ENCODE measurements at regions of chr5 and their contacts with region 1.

Region 1: GRCh38 chr5:40688127-40688761 is 8.5 kb downstream of the PTGER4 start:
- DNase-seq: peak in 1 of 2 donors; percentile 91
- H3K4me3 ChIP-seq: no peak overlapping the region
- H3K27ac ChIP-seq: no peak overlapping the region
- H3K4me1 ChIP-seq: no peaks in the 10 kb centered on the region
- H3K27me3 ChIP-seq: no peaks in the 10 kb centered on the region
- CTCF ChIP-seq: peak; percentile 76 to 82 (median 81)

Region 2: GRCh38 chr5:39578887-39579497 is 1109.3 kb before region 1 on chr5:
- intact Hi-C with region 1: loop called (anchors 2 kb)
- DNase-seq: no peak
- H3K4me3 ChIP-seq: no peak overlapping the region
- H3K27ac ChIP-seq: no peak overlapping the region
- H3K4me1 ChIP-seq: no peaks in the 10 kb centered on the region
- H3K27me3 ChIP-seq: no peaks in the 10 kb centered on the region
- CTCF ChIP-seq: peak in 2 of 3 experiments; percentile 67

Region 3: DNA sequence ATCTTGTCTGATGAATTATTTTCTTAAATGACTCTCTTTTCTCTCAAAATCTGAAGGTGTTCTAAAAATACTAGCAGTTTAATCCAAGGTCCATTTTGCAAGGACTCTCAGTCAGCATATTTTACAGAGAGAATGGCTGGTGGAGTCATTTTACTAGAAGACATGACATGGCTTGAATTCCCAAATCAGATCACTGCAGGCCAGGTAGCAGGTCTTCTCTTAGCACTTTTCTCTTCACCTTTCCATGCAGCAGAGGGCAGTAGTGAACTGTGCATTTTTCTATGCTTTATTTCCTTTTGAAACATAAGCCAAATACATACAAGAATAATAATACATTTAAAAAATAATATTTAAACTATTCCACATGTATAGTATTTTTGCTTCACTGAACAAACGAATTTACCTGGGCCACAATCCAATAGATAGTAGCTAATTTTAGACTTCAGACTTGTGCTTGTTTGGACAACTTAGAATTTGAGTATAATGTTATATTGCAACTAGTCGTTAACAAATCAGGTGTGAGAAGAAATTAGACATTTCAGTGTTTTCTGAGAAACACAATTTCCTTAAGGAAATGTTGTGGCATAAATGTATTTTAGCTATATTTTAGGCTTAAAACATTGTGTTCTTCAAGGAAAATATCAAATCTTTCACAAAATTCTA is 974.1 kb before region 1 on chr5:
- intact Hi-C with region 1: loop called (anchors 2 kb)
- DNase-seq: no peak
- H3K4me3 ChIP-seq: no peak overlapping the region
- H3K27ac ChIP-seq: no peak overlapping the region
- H3K4me1 ChIP-seq: no peaks in the 10 kb centered on the region
- H3K27me3 ChIP-seq: no peaks in the 10 kb centered on the region
- CTCF ChIP-seq: peak; percentile 25 to 46 (median 43)

Region 4: DNA sequence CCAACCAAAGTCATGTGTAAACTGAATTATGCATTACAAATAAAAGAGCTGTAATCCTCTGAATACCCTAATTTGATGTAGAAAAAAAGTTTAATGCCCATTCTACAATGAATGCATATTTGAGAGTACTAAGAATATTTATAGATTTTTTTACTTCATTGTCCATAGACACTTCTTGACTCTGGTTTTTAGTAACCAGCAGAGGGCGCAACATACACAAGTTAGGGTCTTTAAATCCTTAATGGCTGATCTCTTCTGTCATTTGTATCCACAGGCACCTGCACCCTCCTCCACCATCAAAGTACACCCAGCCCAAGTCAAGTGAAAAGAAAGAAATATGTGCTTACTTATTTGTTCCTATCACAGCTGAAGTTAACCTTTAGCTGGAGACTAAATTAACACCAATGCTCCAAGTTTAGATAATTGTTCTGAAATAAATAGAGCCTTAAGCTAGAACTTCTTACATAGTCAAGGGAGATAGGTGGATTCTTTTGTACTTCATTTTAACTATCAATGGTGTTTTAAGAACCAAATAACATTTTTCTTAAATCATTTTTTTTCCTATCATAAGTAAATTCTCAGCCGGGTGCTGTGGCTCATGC is 739.3 kb before region 1 on chr5:
- intact Hi-C with region 1: loop called (anchors 10 kb)
- DNase-seq: no peak
- H3K4me3 ChIP-seq: no peak overlapping the region
- H3K27ac ChIP-seq: no peak overlapping the region
- H3K4me1 ChIP-seq: no peaks in the 10 kb centered on the region
- H3K27me3 ChIP-seq: no peaks in the 10 kb centered on the region
- CTCF ChIP-seq: peak; percentile 7 to 42 (median 21)

Region 5: DNA sequence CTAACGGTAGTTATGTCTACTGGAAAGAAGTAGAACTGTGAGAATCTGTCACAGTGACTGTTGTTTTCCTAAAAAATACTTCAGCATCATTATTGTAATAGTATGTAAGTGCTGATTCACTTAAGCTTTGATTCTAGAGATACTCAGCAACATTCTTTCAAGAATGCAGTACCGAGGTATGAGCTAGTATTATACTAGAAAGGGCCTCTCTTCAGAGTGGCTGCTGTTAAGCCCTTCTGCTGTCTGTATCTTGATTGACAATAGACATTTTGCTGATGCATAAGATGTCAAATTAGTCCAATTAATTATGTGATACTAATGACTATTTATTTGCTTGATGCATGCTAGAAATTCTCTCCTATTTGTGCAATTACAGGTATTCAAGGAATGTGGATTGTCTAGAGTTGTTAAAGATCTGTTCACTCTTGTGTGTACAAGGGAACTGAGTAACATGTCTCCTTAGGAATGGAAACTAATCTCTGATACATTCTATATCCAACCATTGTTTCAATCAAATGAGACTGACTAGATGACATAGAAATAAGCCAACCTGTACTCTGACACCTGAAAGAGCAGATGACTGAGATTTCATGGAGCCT is 100.9 kb before region 1 on chr5:
- intact Hi-C with region 1: no loop called
- DNase-seq: no peak
- H3K4me3 ChIP-seq: no peak overlapping the region
- H3K27ac ChIP-seq: no peak overlapping the region
- H3K4me1 ChIP-seq: no peaks in the 10 kb centered on the region
- H3K27me3 ChIP-seq: no peaks in the 10 kb centered on the region
- CTCF ChIP-seq: no peak

Region 6: GRCh38 chr5:40700116-40700782 is 12.0 kb after region 1 on chr5:
- intact Hi-C with region 1: no loop called
- DNase-seq: no peak
- H3K4me3 ChIP-seq: no peak overlapping the region
- H3K27ac ChIP-seq: no peak overlapping the region
- H3K4me1 ChIP-seq: no peaks in the 10 kb centered on the region
- H3K27me3 ChIP-seq: no peaks in the 10 kb centered on the region
- CTCF ChIP-seq: no peak

Region 7: GRCh38 chr5:41057231-41057630 is 369.0 kb after region 1 on chr5:
- intact Hi-C with region 1: no loop called
- DNase-seq: no peak
- H3K4me3 ChIP-seq: no peak overlapping the region
- H3K27ac ChIP-seq: no peak overlapping the region
- H3K4me1 ChIP-seq: no peaks in the 10 kb centered on the region
- H3K27me3 ChIP-seq: no peaks in the 10 kb centered on the region
- CTCF ChIP-seq: no peak

Region 8: DNA sequence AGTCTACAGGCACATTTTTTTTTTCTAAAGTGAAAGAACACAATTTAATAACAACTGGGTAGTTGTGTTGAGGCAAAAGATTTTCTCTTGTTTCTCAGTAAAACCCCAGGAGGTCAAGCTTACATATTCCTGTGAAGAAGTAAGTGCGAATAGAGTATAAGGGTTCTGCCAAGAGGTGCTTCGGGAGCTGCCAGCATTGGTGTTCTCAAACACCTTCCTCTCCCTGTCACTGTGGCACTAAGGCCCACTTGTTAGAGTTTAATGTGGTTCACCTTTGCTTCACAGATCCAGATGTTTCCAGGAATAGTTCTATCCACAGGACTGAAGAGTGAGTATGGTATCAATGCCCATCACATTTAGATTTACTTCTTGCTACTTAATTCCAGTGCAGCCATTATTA is 616.8 kb after region 1 on chr5:
- intact Hi-C with region 1: no loop called
- DNase-seq: no peak
- H3K4me3 ChIP-seq: no peak overlapping the region
- H3K27ac ChIP-seq: no peak overlapping the region
- H3K4me1 ChIP-seq: no peaks in the 10 kb centered on the region
- H3K27me3 ChIP-seq: no peaks in the 10 kb centered on the region
- CTCF ChIP-seq: no peak

Measured in ascending aorta (tissue), 2 donors.